WTC11 (cell line): ENCODE measurements at regions of chr17 and their contacts with region 1.

Region 1: DNA sequence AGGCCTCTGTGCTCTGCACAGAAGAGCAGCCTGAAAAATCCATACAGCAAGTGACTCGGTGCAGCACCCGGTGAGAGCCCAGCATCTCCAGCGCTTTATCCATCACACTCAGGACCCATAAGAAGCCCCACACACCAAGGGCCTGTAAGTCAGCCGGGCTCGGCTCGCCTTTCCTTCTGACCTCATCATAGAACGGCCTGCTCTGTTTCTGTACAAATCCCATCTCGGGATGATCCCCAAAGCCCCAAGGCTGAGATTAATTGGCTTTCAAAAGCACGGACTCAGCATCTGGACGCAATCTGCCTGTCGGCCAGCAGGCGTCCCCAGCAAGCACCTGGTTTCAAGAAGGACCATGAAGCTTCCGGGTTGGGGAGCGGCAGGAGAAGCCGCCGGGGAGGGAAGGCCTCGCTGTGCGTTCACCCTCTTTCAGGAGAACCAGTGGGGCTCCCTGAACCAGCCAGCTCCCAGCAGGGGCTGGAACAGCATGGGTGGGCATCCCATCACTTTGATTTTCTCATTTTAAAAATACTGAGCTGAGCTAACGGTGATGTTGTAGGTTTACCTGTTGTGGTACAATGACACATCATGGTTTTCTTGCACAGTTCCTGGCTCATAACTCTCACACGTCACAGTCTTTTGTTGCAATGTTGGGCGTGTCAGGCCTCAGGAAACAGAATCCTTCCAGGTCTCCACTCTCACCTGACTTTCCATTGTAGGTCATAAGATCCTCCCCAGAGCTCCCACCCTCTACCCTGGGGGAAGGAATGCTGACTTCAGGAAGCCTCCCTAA is 6.7 kb downstream of the CCDC57 start:
- DNase-seq: peak; percentile 78
- ATAC-seq: peak; percentile 91
- H3K4me3 Mint-ChIP-seq: no peak overlapping the region
- H3K27ac Mint-ChIP-seq: no peak overlapping the region
- H3K4me1 Mint-ChIP-seq: peaks cover 10% of the 10 kb centered on the region
- H3K27me3 Mint-ChIP-seq: peaks cover 3% of the 10 kb centered on the region; the same call in 1 of the 2 replicates
- CTCF ChIP-seq: peak; percentile 70

Region 2: GRCh38 chr17:82236142-82236981 is 30.4 kb after region 1 on chr17:
- CTCF ChIA-PET with region 1: interaction called, 11 read pairs
- POLR2A ChIA-PET with region 1: no interaction called
- DNase-seq: peak; percentile 79
- ATAC-seq: peak; percentile 41
- H3K4me3 Mint-ChIP-seq: no peak overlapping the region
- H3K27ac Mint-ChIP-seq: peak overlapping the region; percentile 60
- H3K4me1 Mint-ChIP-seq: peaks cover 7% of the 10 kb centered on the region
- H3K27me3 Mint-ChIP-seq: no peaks in the 10 kb centered on the region; the same call in 1 of the 2 replicates
- CTCF ChIP-seq: peak; percentile 88

Region 3: GRCh38 chr17:82559566-82560251 is 353.8 kb after region 1 on chr17:
- CTCF ChIA-PET with region 1: no interaction called
- POLR2A ChIA-PET with region 1: no interaction called
- DNase-seq: no peak
- ATAC-seq: no peak
- H3K4me3 Mint-ChIP-seq: no peak overlapping the region
- H3K27ac Mint-ChIP-seq: no peak overlapping the region
- H3K4me1 Mint-ChIP-seq: peaks cover 16% of the 10 kb centered on the region
- H3K27me3 Mint-ChIP-seq: no peaks in the 10 kb centered on the region
- CTCF ChIP-seq: no peak